A673 (cell line): ENCODE measurements at regions of chr19 and their contacts with region 1.

Region 1: DNA sequence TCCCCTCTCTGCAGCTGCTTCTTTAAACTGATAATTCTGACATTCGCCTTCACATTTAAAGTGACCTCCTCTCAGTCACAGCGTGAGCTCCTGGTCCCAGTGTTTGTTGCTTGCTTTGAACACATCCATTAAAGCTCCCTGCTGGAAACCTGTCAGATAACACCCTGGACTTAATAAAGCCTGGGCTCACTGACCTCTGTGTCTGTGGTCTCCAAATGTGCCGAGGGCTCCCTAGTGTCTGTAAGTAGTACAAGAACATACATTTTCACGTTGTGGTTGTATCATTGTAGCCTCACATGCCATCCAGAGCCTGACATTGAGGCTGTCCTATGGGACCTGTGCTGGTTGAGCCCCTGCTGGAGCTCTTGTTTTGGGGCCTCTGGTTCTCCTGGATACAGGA is 2.6 kb upstream of the PSG4 start:
- DNase-seq: no peak
- H3K4me3 ChIP-seq: no peak overlapping the region
- H3K27ac ChIP-seq: no peak overlapping the region
- H3K4me1 ChIP-seq: no peaks in the 10 kb centered on the region
- H3K27me3 ChIP-seq: no peaks in the 10 kb centered on the region
- CTCF ChIP-seq: no peak

Region 2: DNA sequence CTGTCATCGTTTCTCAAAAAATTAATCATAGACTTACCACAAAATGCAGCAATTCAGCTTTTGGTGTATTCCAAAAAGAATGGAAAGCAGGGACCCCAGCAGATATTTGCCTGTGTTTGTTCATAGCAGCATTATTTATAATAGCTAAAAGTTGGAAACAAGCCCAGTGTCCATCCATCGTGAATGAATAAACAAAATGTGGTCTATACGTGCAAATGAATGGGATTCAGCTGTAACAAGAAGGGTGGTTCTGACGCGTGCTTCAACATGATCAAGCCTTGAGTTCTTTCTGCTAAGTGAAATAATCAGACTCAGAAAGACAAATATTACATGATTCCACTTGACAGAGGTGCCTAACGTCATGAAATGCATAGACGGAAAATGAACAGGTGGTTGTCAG is 218.1 kb before region 1 on chr19:
- CTCF ChIA-PET with region 1: no interaction called
- POLR2A ChIA-PET with region 1: no interaction called
- intact Hi-C with region 1: no loop called
- DNase-seq: no peak
- H3K4me3 ChIP-seq: no peak overlapping the region
- H3K27ac ChIP-seq: no peak overlapping the region
- H3K4me1 ChIP-seq: no peaks in the 10 kb centered on the region
- H3K27me3 ChIP-seq: no peaks in the 10 kb centered on the region
- CTCF ChIP-seq: no peak

Region 3: DNA sequence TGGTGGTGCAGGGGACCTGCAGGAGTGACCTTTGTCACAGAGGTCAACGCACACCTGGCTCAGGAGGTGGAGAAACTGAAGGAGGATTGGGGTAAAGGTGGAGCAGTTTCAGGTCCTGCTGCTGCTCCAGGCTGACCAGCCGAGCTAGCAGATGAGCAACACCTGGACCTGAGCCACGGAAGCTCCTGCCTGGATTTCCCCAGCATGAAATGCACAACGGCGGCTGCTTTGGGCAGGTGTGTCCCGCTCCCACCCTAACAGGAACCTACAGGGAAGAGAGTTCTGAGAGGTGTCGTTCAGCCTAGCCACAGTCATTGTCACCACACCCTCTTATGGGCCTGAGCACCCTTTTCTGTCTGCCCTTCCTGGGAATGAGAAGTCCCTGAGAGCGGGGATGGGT is 129.7 kb after region 1 on chr19:
- CTCF ChIA-PET with region 1: no interaction called
- POLR2A ChIA-PET with region 1: no interaction called
- intact Hi-C with region 1: no loop called
- DNase-seq: no peak
- H3K4me3 ChIP-seq: no peak overlapping the region
- H3K27ac ChIP-seq: no peak overlapping the region
- H3K4me1 ChIP-seq: no peaks in the 10 kb centered on the region
- H3K27me3 ChIP-seq: peaks cover 24% of the 10 kb centered on the region
- CTCF ChIP-seq: no peak

Region 4: GRCh38 chr19:44903602-44904425 is 1695.8 kb after region 1 on chr19:
- CTCF ChIA-PET with region 1: interaction called, 12 read pairs
- POLR2A ChIA-PET with region 1: no interaction called
- intact Hi-C with region 1: no loop called
- DNase-seq: peak; percentile 65
- H3K4me3 ChIP-seq: no peak overlapping the region
- H3K27ac ChIP-seq: no peak overlapping the region
- H3K4me1 ChIP-seq: peaks cover 6% of the 10 kb centered on the region
- H3K27me3 ChIP-seq: no peaks in the 10 kb centered on the region
- CTCF ChIP-seq: peak; percentile 97